B cell (primary cell): ENCODE measurements at regions of chr18 and their contacts with region 1.

Region 1: DNA sequence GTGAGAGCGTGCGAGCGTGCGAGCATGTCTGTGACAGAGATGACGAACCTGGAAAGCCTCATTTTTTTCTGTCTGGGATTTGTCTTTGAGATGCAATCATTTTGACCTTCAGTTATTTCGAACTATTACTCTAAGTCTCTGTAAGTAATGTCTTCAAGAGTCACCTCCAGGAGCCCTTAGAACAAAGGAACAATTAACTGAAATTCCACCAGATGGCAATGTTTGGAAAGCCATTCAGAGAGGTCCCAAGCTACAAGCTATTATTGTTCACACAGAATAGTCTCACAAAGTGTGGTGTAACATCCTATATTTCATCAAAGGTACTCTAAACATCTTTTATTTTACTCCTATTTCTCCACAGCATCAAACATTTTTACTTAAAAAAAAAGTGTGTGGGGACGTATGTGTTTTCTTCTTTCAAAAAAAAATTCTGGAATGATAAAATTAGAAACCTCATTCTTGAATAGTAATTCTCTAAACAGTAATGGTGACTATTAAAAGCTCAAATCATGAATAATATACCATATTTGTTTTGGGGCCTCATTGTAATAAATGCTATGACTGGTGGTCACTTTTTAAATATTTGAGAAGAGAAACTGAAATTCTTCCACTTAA is 35.1 kb upstream of the MAPRE2 start:
- DNase-seq: peak; percentile 74
- ATAC-seq: peak; percentile 63
- H3K4me3 ChIP-seq: no peak overlapping the region
- H3K4me3 Mint-ChIP-seq: no peak overlapping the region
- H3K27ac ChIP-seq: no peak overlapping the region
- H3K27ac Mint-ChIP-seq: no peak overlapping the region
- H3K4me1 ChIP-seq: no peaks in the 10 kb centered on the region
- H3K4me1 Mint-ChIP-seq: no peaks in the 10 kb centered on the region
- H3K27me3 ChIP-seq: no peaks in the 10 kb centered on the region
- H3K27me3 Mint-ChIP-seq: peaks cover 4% of the 10 kb centered on the region
- CTCF ChIP-seq: peak; percentile 77

Region 2: GRCh38 chr18:34661464-34662111 is 344.5 kb before region 1 on chr18:
- CTCF ChIA-PET with region 1: no interaction called
- POLR2A ChIA-PET with region 1: no interaction called
- intact Hi-C with region 1: no loop called
- DNase-seq: peak; percentile 20
- ATAC-seq: no peak
- H3K4me3 ChIP-seq: no peak overlapping the region
- H3K4me3 Mint-ChIP-seq: no peak overlapping the region
- H3K27ac ChIP-seq: no peak overlapping the region
- H3K27ac Mint-ChIP-seq: no peak overlapping the region
- H3K4me1 ChIP-seq: no peaks in the 10 kb centered on the region
- H3K4me1 Mint-ChIP-seq: no peaks in the 10 kb centered on the region
- H3K27me3 ChIP-seq: no peaks in the 10 kb centered on the region
- H3K27me3 Mint-ChIP-seq: peaks cover 15% of the 10 kb centered on the region
- CTCF ChIP-seq: peak; percentile 82

Region 3: GRCh38 chr18:35050028-35050546 is 44.0 kb after region 1 on chr18:
- CTCF ChIA-PET with region 1: interaction called, 10 read pairs
- POLR2A ChIA-PET with region 1: no interaction called
- intact Hi-C with region 1: no loop called
- DNase-seq: no peak
- ATAC-seq: peak; percentile 31
- H3K4me3 ChIP-seq: peak overlapping the region in 3 of 5 experiments; percentile 21 to 57 (median 27)
- H3K4me3 Mint-ChIP-seq: peak overlapping the region; percentile 83
- H3K27ac ChIP-seq: peak overlapping the region; percentile 85 to 87
- H3K27ac Mint-ChIP-seq: peak overlapping the region; percentile 88
- H3K4me1 ChIP-seq: peaks cover 50 to 55% of the 10 kb centered on the region in 2 donors
- H3K4me1 Mint-ChIP-seq: peaks cover 79% of the 10 kb centered on the region
- H3K27me3 ChIP-seq: no peaks in the 10 kb centered on the region
- H3K27me3 Mint-ChIP-seq: no peaks in the 10 kb centered on the region
- CTCF ChIP-seq: no peak

Region 4: DNA sequence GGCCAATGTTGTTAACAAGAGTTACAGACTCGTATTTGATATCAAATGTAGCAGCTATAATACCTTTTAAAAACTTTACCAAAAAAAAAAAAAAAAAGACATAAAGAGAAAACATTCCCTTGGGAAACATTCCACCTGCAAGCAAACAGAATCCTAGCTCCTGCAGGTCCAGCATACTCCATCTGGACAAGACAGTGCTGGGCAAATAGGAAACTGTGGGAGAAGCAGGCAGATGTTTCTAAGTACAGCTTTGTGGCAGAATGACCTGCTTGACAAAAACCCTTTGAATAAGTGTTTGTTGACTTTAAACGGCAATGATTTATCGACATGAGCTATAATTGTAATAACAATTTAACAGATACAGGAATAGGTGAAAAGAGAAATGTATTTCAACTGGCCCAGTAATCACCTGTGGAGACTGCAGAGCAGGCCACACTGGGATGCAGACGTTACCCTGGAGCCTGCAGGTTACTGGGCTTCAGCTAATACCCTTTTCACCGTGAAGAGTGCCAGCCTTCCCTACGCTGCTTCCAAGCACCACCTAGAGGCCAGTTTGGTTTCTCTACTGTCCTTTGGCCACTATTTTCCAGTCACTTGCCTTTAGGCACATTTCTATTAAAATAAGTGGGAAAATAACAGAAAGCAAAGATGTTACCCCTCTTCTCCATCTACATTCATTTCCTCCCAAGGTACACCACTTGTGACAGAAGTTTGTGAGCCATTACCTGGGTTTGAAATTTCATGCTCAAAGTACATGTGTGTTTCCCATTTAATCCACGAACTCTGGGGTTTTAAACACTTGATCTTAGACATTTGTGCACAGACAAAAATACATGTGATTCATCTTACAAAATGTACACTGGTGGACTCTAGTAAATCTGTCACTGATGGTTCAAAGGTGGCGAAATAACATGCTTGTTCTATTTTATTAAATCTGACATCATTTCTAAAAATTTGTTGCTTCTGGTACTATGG is 137.8 kb after region 1 on chr18:
- CTCF ChIA-PET with region 1: interaction called, 98 read pairs
- POLR2A ChIA-PET with region 1: no interaction called
- intact Hi-C with region 1: loop called (anchors 1 kb)
- DNase-seq: peak; percentile 52
- ATAC-seq: peak; percentile 67
- H3K4me3 ChIP-seq: no peak overlapping the region
- H3K4me3 Mint-ChIP-seq: no peak overlapping the region
- H3K27ac ChIP-seq: peak overlapping the region in 1 of 2 donors; percentile 31
- H3K27ac Mint-ChIP-seq: peak overlapping the region; percentile 6
- H3K4me1 ChIP-seq: peaks cover 24 to 28% of the 10 kb centered on the region in 2 donors
- H3K4me1 Mint-ChIP-seq: peaks cover 39% of the 10 kb centered on the region
- H3K27me3 ChIP-seq: no peaks in the 10 kb centered on the region
- H3K27me3 Mint-ChIP-seq: no peaks in the 10 kb centered on the region
- CTCF ChIP-seq: peak; percentile 55

Region 5: DNA sequence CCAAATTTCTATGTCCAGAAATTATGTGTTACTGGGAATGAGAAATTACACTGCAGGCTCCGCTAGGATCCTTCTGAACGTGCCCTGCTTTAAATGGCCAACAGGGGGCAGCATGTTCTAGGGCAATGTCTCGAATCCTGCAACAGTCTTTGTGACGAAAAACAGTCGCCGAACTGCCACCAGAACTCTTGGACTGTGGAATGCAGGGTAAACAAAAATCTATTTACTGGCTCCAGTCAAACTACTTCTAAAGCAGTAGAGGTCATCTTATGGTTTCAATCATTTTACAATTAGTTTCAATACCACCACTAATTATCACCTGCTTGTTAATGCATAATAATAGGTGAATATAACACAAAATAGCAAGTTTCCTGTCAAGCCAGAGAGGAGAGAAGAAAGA is 225.0 kb after region 1 on chr18:
- CTCF ChIA-PET with region 1: interaction called, 16 read pairs
- POLR2A ChIA-PET with region 1: no interaction called
- intact Hi-C with region 1: loop called (anchors 2 kb)
- DNase-seq: peak; percentile 86
- ATAC-seq: peak; percentile 88
- H3K4me3 ChIP-seq: peak overlapping the region in 1 of 5 experiments; percentile 31
- H3K4me3 Mint-ChIP-seq: peak overlapping the region; percentile 59
- H3K27ac ChIP-seq: no peak overlapping the region
- H3K27ac Mint-ChIP-seq: peak overlapping the region; percentile 10
- H3K4me1 ChIP-seq: no peaks in the 10 kb centered on the region
- H3K4me1 Mint-ChIP-seq: peaks cover 3% of the 10 kb centered on the region
- H3K27me3 ChIP-seq: no peaks in the 10 kb centered on the region
- H3K27me3 Mint-ChIP-seq: no peaks in the 10 kb centered on the region
- CTCF ChIP-seq: peak; percentile 99

Region 6: GRCh38 chr18:35324926-35325655 is 319.0 kb after region 1 on chr18:
- CTCF ChIA-PET with region 1: no interaction called
- POLR2A ChIA-PET with region 1: no interaction called
- intact Hi-C with region 1: no loop called
- DNase-seq: no peak
- ATAC-seq: no peak
- H3K4me3 ChIP-seq: no peak overlapping the region
- H3K4me3 Mint-ChIP-seq: no peak overlapping the region
- H3K27ac ChIP-seq: no peak overlapping the region
- H3K27ac Mint-ChIP-seq: no peak overlapping the region
- H3K4me1 ChIP-seq: no peaks in the 10 kb centered on the region
- H3K4me1 Mint-ChIP-seq: no peaks in the 10 kb centered on the region
- H3K27me3 ChIP-seq: no peaks in the 10 kb centered on the region
- H3K27me3 Mint-ChIP-seq: no peaks in the 10 kb centered on the region
- CTCF ChIP-seq: no peak